Common myeloid progenitor, CD34-positive (primary cell): ENCODE measurements at regions of chr12 and their contacts with region 1.

Region 1: DNA sequence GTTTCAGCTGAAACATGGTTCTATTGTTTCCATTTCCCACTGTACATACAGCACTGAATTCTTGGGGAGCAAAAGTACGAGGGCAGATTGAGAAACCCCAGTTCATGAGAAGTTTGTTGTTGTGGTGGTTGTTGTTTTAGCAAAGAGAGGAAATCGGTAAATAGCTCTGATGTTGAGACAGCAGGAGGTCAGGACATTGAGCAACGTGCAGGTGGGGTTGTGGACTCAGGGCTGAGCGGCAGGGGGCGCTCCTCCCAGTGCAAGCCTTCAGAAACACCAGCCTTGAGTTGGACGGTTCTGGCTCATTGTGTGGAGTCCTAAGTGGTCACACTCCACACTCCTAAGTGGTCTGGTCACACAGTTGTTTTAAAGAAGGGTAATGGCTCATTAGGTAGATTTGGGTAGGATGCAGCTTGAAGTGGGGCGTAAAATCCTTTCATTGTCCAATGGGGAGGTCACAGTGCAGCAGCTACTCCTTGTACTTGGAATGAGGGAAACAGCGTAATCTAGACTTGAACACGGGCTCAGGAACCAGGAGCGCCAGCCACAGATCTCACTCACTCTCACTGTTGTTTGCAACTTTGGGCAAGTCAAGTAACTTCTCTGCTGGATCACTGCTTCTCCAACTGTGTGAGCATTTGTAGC is 14.5 kb upstream of the PWP1 start:
- DNase-seq: peak; percentile 28 to 47 (median 38)
- H3K4me3 ChIP-seq: no peak overlapping the region
- H3K27ac ChIP-seq: no peak overlapping the region
- H3K4me1 ChIP-seq: no peaks in the 10 kb centered on the region
- H3K27me3 ChIP-seq: peaks cover 0 to 17% (median 12%) of the 10 kb centered on the region in 5 experiments

Region 2: DNA sequence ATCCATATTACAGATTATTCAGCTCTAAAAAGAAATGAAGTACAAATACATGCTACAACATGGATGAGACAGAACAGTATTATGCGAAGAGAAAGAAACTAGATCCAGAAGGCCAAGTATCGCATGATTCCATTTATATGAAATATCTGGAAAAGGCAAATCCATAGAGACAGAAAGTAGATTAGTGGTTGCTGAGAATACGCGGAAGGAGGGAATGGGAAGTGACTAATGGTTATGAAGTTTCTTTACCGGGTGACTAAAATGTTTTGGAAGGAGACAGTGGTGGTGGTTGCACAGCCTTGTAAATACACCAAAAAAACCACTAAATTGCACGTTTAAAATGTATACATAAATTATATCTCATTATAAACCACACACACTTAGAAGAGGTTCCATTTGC is 77.4 kb after region 1 on chr12:
- CTCF ChIA-PET with region 1: no interaction called
- POLR2A ChIA-PET with region 1: no interaction called
- DNase-seq: no peak
- H3K4me3 ChIP-seq: no peak overlapping the region
- H3K27ac ChIP-seq: no peak overlapping the region
- H3K4me1 ChIP-seq: no peaks in the 10 kb centered on the region
- H3K27me3 ChIP-seq: no peaks in the 10 kb centered on the region

Region 3: GRCh38 chr12:107884769-107885694 is 213.9 kb after region 1 on chr12:
- CTCF ChIA-PET with region 1: interaction called, 17 read pairs
- POLR2A ChIA-PET with region 1: no interaction called
- DNase-seq: peak; percentile 64 to 75 (median 70)
- H3K4me3 ChIP-seq: no peak overlapping the region
- H3K27ac ChIP-seq: no peak overlapping the region
- H3K4me1 ChIP-seq: no peaks in the 10 kb centered on the region
- H3K27me3 ChIP-seq: peaks cover 0 to 9% (median 0%) of the 10 kb centered on the region in 5 experiments